Activated T-helper 1 cell treated with anti-CD3 and anti-CD28 coated beads, Interleukin-12 subunit alpha, Interleukin-12 subunit beta, Interleukin-2, Interleukin-4 antibody, amounts not matched to agents 30 ng/mL and 10 ng/mL and 1 ng/mL, durations not matched to agents 14 hours and 24 hours and 36 hours (primary cell): ENCODE measurements at regions of chr5 and their contacts with region 1.

Region 1: DNA sequence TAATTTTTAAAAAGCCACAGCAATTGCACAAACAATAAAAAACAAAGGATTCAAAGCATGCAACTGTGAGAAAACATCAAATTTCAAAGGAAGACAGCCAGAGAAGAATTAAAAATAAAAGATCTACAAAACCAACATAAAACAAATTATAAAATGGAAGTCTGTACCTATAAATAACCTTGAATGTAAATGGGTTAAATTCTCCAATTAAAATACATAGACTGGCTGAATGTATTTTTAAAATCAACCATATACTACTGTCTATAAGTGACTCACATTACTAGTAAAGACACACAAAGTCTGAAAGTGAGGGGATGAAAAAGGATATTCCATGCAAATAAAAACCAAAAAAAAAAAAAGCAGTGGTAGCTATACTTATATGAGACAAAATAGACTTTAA is 33.7 kb downstream of the BTNL8 start:
- DNase-seq: no peak
- H3K4me3 Mint-ChIP-seq: no peak overlapping the region
- H3K27ac Mint-ChIP-seq: no peak overlapping the region
- H3K4me1 Mint-ChIP-seq: no peaks in the 10 kb centered on the region
- H3K27me3 Mint-ChIP-seq: peaks cover 5% of the 10 kb centered on the region

Region 2: GRCh38 chr5:181024245-181025064 is 91.8 kb after region 1 on chr5:
- intact Hi-C with region 1: loop called (anchors 5 kb)
- DNase-seq: no peak
- H3K4me3 Mint-ChIP-seq: no peak overlapping the region
- H3K27ac Mint-ChIP-seq: no peak overlapping the region
- H3K4me1 Mint-ChIP-seq: no peaks in the 10 kb centered on the region
- H3K27me3 Mint-ChIP-seq: peaks cover 3% of the 10 kb centered on the region